ENCODE measurements at regions of chr2 and their contacts with region 1.

Region 1: DNA sequence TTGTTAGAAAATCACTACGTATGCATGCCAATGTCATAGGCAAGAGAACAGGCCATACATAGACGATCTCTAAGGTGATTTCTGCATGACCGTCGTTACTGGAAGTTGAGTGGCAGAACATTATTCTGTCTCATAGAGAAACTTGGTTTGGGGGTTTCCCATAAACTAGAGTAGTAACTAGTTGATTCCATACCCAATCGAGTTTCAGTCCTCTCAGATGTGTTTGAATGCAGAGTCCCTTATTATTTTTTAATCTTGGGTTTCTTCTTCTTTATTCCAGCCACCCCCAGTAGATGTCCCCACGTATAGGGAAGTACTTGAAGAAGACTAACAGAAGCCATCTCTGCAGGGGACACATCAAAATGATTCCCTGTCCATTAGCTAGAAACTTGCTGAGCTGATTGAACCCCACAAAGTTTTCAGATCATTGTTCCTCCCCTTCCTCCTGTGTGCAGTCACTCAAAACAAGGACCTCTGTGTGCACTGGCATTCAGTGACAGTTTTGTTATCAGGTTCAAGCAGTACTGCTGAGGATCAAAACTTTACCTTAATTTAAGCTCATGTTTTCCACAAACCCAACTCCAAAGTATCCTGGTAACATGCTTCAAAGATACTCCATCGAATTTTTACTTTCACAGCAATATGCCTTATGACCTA is 68.4 kb upstream of the CDCA7 start:
- DNase-seq: no peak
- H3K4me3 Mint-ChIP-seq: no peak overlapping the region
- H3K27ac Mint-ChIP-seq: peak overlapping the region; percentile 35
- H3K4me1 Mint-ChIP-seq: peaks cover 19% of the 10 kb centered on the region
- H3K27me3 Mint-ChIP-seq: peaks cover 2% of the 10 kb centered on the region

Region 2: DNA sequence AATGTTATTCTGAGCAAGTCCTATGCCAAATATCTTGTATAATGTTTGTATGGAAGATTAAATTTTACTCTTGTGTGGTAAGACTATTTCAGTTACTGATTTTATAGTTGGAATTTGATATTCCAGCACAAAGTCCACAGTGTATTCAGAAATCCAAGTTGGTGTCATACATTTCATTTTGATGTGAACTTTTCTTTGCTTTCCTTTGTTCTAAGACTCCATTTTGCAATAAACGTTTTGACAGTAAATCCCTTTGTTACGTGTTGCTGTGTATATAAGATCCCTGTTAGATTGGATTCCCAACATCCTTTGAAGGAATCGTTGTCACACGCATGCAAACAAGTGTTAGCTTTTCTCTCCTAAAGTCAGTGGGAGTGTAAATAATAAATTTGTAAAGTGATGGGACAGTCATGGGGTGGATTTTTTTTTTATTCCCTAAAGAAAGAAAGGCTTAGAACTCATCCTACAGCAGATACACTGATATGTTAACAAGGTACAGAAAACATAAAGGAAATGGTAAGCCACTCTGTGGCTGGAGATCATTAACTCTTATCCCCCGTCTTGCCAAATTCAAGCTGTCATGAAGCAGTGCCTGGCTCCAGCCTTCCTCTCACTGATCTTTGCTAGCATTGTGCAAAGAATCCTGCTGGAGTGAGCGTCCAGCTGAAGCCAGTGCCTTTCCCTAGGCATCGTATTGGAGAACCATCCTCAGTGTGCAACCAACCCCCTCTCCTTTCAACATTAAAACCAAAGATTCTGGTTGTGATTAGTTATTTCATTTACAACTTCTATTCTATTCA is 59.2 kb before region 1 on chr2:
- intact Hi-C with region 1: no loop called
- DNase-seq: no peak
- H3K4me3 Mint-ChIP-seq: no peak overlapping the region
- H3K27ac Mint-ChIP-seq: no peak overlapping the region
- H3K4me1 Mint-ChIP-seq: peaks cover 7% of the 10 kb centered on the region
- H3K27me3 Mint-ChIP-seq: peaks cover 9% of the 10 kb centered on the region

Region 3: DNA sequence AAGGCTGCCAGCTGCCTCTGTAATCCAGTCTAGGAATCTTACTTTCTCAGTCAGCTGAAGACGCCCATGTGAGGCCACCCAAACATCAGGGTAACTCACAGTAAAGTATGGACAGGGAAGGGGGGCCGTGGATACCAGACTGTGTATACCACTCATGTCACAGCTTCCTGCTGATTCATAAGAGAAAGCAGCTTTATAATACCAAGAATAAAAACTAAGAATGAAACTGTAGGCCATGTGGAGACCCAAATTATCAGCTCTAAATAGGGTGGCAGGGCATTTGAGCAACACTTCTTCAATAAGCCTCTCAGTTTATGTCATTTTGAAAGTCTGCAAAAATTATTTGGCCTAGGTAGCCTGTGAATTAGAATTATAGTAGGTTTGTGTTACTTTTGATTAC is 46.6 kb before region 1 on chr2:
- intact Hi-C with region 1: loop called (anchors 1 kb)
- DNase-seq: peak; percentile 14
- H3K4me3 Mint-ChIP-seq: no peak overlapping the region
- H3K27ac Mint-ChIP-seq: no peak overlapping the region
- H3K4me1 Mint-ChIP-seq: peaks cover 17% of the 10 kb centered on the region
- H3K27me3 Mint-ChIP-seq: peaks cover 21% of the 10 kb centered on the region

Region 4: GRCh38 chr2:173370198-173370597 is 83.9 kb after region 1 on chr2:
- intact Hi-C with region 1: loop called (anchors 5 kb)
- DNase-seq: no peak
- H3K4me3 Mint-ChIP-seq: no peak overlapping the region
- H3K27ac Mint-ChIP-seq: peak overlapping the region; percentile 80
- H3K4me1 Mint-ChIP-seq: peaks cover 32% of the 10 kb centered on the region
- H3K27me3 Mint-ChIP-seq: no peaks in the 10 kb centered on the region

Region 5: GRCh38 chr2:174166281-174166680 is 880.0 kb after region 1 on chr2:
- intact Hi-C with region 1: no loop called
- DNase-seq: no peak
- H3K4me3 Mint-ChIP-seq: no peak overlapping the region
- H3K27ac Mint-ChIP-seq: no peak overlapping the region
- H3K4me1 Mint-ChIP-seq: no peaks in the 10 kb centered on the region
- H3K27me3 Mint-ChIP-seq: no peaks in the 10 kb centered on the region

Measured in activated T-helper 2 cell treated with anti-CD3 and anti-CD28 coated beads, Interferon-gamma antibody, Interleukin-2, Interleukin-4, amounts not matched to agents 10 μg/mL and 5 μg/mL and 100 μg/mL, durations not matched to agents 14 hours and 24 hours and 36 hours (primary cell).